WTC11 (cell line): ENCODE measurements at regions of chr18 and their contacts with region 1.

Region 1: DNA sequence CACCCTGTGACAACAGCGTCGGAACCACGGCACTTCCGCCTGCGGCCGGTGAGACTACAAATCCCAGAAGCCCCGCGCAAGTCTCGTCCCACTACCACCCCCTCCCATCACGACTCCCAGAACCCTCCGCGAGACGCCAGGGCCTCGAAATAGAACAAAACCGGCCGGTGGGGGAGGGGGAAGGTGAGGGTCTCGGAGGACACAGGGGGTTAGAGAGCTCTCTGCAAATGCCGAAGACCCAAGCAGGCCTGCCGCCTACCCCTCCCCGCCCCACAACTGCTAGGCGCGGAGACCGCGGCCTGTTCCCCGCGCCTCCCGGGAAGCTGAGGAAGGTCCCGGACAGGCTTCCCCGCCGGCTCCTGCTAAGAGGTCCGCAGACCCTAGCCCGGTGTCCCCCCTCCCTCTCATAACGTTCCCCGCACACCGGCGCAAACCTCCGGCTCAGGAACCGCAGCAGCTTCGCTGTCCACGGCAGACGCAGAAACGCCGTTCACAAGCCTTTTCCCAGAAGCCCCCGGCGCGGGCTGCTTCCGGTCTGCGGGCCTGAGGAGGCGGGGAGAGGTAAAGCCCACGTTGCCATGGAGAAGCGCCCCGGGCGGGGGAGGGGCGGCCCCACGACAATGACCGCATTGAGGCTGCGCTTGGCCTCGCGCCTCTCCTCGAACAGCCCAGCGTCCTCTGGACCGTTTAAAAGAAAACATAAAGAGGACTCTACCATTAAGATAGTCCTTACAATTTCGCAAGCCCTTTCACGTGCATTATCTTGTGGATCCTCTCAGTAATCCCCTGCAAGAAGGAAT is at the start of gene ZNF24:
- DNase-seq: peak; percentile 90
- ATAC-seq: peak; percentile 89
- H3K4me3 Mint-ChIP-seq: peak within 1 kb of the TSS; percentile 98
- H3K27ac Mint-ChIP-seq: peak within 1 kb of the TSS; percentile 89
- H3K4me1 Mint-ChIP-seq: peaks cover 21% of the 10 kb centered on the region
- H3K27me3 Mint-ChIP-seq: peaks cover 3% of the 10 kb centered on the region
- CTCF ChIP-seq: no peak
- total RNA-seq, gene ZNF24: 56.9 to 59.0 TPM (median 58.3 TPM) in 3 replicates

Region 2: GRCh38 chr18:34251919-34252318 is 1092.2 kb before region 1 on chr18:
- CTCF ChIA-PET with region 1: no interaction called
- POLR2A ChIA-PET with region 1: no interaction called
- DNase-seq: no peak
- ATAC-seq: no peak
- H3K4me3 Mint-ChIP-seq: no peak overlapping the region
- H3K27ac Mint-ChIP-seq: no peak overlapping the region
- H3K4me1 Mint-ChIP-seq: peaks cover 3% of the 10 kb centered on the region; the same call in 1 of the 2 replicates
- H3K27me3 Mint-ChIP-seq: no peaks in the 10 kb centered on the region
- CTCF ChIP-seq: no peak

Region 3: GRCh38 chr18:35324926-35325655 is 19.0 kb before region 1 on chr18:
- CTCF ChIA-PET with region 1: no interaction called
- POLR2A ChIA-PET with region 1: no interaction called
- DNase-seq: no peak
- ATAC-seq: peak; percentile 92
- H3K4me3 Mint-ChIP-seq: no peak overlapping the region
- H3K27ac Mint-ChIP-seq: peak overlapping the region; percentile 69
- H3K4me1 Mint-ChIP-seq: peaks cover 9% of the 10 kb centered on the region
- H3K27me3 Mint-ChIP-seq: peaks cover 4% of the 10 kb centered on the region
- CTCF ChIP-seq: no peak

Region 4: GRCh38 chr18:35355140-35355618 is 11.0 kb after region 1 on chr18:
- CTCF ChIA-PET with region 1: interaction called, 23 read pairs
- POLR2A ChIA-PET with region 1: interaction called, 8 read pairs
- DNase-seq: peak; percentile 65
- ATAC-seq: peak; percentile 100
- H3K4me3 Mint-ChIP-seq: no peak overlapping the region
- H3K27ac Mint-ChIP-seq: no peak overlapping the region
- H3K4me1 Mint-ChIP-seq: no peaks in the 10 kb centered on the region; the same call in 1 of the 2 replicates
- H3K27me3 Mint-ChIP-seq: peaks cover 3% of the 10 kb centered on the region; the same call in 1 of the 2 replicates
- CTCF ChIP-seq: no peak

Region 5: GRCh38 chr18:35526476-35527120 is 182.5 kb after region 1 on chr18:
- CTCF ChIA-PET with region 1: no interaction called
- POLR2A ChIA-PET with region 1: no interaction called
- DNase-seq: no peak
- ATAC-seq: peak; percentile 61
- H3K4me3 Mint-ChIP-seq: no peak overlapping the region
- H3K27ac Mint-ChIP-seq: 0 out of 2 replicates have a peak overlapping the region, but pooled peaks have one; percentile 3
- H3K4me1 Mint-ChIP-seq: peaks cover 37% of the 10 kb centered on the region
- H3K27me3 Mint-ChIP-seq: no peaks in the 10 kb centered on the region; the same call in 1 of the 2 replicates
- CTCF ChIP-seq: no peak

Region 6: GRCh38 chr18:35542356-35542755 is 198.2 kb after region 1 on chr18:
- CTCF ChIA-PET with region 1: no interaction called
- POLR2A ChIA-PET with region 1: no interaction called
- DNase-seq: no peak
- ATAC-seq: no peak
- H3K4me3 Mint-ChIP-seq: no peak overlapping the region
- H3K27ac Mint-ChIP-seq: no peak overlapping the region
- H3K4me1 Mint-ChIP-seq: no peaks in the 10 kb centered on the region
- H3K27me3 Mint-ChIP-seq: no peaks in the 10 kb centered on the region
- CTCF ChIP-seq: no peak